ENCODE measurements at regions of chr7 and their contacts with region 1.

Region 1: DNA sequence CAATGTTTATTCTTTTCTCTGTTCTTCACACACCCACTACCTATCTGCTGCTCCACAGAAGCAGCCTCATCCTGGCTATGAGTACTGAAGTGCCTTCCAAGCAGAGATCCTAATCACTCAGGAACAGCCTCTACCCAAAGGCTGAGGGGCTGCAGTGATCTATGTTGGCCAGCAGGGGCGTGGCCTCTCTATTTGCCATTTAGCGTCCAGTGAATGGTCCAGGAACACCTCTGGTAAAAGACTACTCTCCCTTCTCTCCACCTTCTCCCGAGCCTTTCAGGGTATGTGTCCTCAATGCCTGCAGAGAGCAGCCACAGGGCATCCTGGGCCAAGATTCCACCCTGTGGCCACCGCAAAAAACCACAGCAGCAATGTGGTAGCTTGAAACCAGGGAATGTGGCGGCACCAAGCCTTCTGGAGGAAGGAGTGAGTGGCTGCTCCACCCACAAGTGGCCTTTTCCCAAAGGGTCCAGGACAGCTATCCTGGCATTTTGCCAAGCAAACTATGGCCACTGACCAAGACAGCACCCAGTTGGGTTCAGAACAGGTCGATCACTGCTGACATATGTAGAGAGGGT is 70.9 kb downstream of the SYPL1 start:
- DNase-seq: no peak
- H3K4me3 ChIP-seq: no peak overlapping the region
- H3K27ac ChIP-seq: no peak overlapping the region
- H3K4me1 ChIP-seq: no peaks in the 10 kb centered on the region
- H3K27me3 ChIP-seq: no peaks in the 10 kb centered on the region
- CTCF ChIP-seq: peak; percentile 30 to 68 (median 39)
- POLR2A ChIP-seq: no peak

Region 2: DNA sequence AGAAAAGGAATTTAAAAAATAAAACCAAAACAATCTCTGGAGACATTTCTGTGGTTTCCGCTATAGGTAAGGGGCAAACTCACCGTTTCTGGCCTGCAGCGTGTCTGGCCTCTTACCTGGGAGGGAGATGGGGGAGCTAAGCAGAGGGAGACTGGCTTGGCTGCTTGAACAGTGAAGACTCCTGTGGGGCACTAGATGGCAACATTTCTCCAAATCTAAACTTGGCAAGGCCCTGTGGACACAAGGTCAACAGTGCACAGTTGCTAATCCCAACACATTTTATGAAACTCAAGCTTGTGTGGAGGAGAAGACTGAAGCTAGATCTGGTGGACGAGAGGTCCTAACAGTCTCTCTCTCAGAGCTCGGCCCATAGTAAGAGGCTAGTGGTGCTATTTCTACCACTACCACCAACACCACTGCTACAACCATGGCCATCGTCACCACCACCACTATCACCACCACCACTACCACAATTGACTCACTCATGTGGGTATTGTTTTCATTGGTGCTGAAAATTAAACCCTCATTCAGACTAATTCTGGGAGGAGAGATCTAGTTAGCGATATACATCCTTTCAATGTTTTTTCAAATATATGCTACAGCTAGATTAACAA is 106.5 kb before region 1 on chr7:
- intact Hi-C with region 1: loop called (anchors 5 kb)
- DNase-seq: peak; percentile 27
- H3K4me3 ChIP-seq: no peak overlapping the region
- H3K27ac ChIP-seq: no peak overlapping the region
- H3K4me1 ChIP-seq: no peaks in the 10 kb centered on the region
- H3K27me3 ChIP-seq: no peaks in the 10 kb centered on the region
- CTCF ChIP-seq: peak in 3 of 4 experiments; percentile 23 to 50 (median 33)
- POLR2A ChIP-seq: no peak

Measured in prostate gland (tissue), 2 donors.